Endothelial cell of umbilical vein (primary cell): ENCODE measurements at regions of chr13 and their contacts with region 1.

Region 1: DNA sequence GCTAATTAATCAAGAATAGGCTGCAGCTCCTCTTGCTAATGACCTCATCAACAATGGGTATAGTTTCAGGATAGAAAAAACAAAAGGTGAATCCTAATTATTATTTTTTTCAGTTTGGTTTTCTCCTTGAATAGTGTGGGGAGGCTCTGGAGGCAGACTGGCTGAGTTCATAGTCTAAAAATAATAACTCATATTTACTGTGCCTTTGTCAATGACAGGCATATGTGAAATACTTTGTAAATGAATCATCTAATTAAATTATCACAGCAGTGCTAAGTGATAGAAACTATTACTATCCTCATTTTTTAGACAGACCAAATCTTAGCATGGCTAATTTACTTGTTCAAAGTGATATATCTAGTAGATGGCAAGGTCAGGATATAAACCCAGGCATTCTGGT is 1261.0 kb upstream of the SLC10A2 start:
- DNase-seq: peak; percentile 55
- H3K4me3 ChIP-seq: no peak overlapping the region
- H3K27ac ChIP-seq: peak overlapping the region; percentile 38
- H3K4me1 ChIP-seq: peaks cover 11% of the 10 kb centered on the region
- H3K27me3 ChIP-seq: no peaks in the 10 kb centered on the region
- CTCF ChIP-seq: no peak
- POLR2A ChIP-seq: no peak

Region 2: DNA sequence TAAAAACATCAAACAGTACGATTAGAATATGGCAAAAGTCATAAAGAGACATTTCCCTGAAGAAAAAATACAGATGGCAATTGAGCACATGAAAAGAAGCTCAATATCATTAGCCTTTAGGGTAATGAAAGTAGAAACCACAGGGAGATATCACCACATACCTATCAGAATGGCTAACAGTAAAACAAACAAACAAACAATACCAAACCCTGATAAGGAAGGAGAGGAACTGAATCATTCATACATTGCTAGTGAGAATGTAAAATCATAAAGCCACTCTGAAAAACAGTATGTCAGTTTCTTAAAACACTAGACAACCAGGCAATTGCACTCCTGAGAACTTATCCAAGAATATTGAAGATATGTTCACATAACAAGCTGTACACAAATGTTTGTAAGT is 81.5 kb after region 1 on chr13:
- CTCF ChIA-PET with region 1: no interaction called
- POLR2A ChIA-PET with region 1: no interaction called
- dilution Hi-C with region 1: no loop called
- intact Hi-C with region 1: loop called (anchors 5 kb)
- DNase-seq: peak; percentile 54
- H3K4me3 ChIP-seq: no peak overlapping the region
- H3K27ac ChIP-seq: peak overlapping the region; percentile 55
- H3K4me1 ChIP-seq: peaks cover 13% of the 10 kb centered on the region
- H3K27me3 ChIP-seq: no peaks in the 10 kb centered on the region
- CTCF ChIP-seq: no peak
- POLR2A ChIP-seq: no peak

Region 3: DNA sequence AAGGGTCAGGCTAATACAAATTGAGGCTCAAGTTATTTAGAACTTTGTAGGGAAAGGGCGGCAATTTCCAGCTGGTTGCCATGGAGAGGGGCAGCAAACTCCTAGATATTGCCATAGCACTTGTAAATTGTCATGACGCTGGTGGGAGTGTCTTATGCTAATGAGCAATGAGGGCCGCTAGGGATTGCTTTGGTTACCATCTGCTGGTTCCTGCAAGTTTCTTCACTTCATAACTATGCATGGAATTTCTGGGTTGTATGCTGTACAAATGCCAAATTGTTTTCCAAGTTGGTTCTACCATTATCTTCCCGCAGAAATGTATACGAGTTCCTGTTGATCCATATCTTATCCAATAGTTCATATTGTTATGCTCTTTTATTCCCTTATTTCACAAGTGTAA is 868.8 kb after region 1 on chr13:
- CTCF ChIA-PET with region 1: no interaction called
- POLR2A ChIA-PET with region 1: no interaction called
- dilution Hi-C with region 1: no loop called
- intact Hi-C with region 1: loop called (anchors 10 kb)
- DNase-seq: peak; percentile 88
- H3K4me3 ChIP-seq: no peak overlapping the region
- H3K27ac ChIP-seq: peak overlapping the region; percentile 69
- H3K4me1 ChIP-seq: peaks cover 9% of the 10 kb centered on the region
- H3K27me3 ChIP-seq: no peaks in the 10 kb centered on the region
- CTCF ChIP-seq: no peak
- POLR2A ChIP-seq: no peak